ENCODE measurements at regions of chr5 and their contacts with region 1.

Region 1: DNA sequence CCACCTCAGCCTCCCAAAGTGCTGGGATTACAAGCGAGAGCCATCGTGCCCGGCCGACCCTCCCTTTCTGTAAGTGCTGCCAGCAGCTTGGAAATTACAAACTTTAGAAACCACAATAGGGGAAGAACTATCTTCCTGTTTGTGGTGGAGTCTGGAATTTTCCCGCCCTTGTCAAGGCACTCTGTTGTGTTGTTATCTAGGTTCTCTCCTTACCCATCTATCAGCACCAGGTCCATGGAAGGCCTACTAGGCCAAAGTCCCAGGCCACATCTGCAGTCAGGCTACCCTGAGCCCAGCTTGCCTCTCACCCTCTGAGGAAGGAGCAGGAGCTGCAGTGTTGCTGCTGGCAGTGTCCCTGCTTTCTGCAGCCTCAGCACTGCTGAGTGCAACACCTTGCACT is 214.9 kb downstream of the MCTP1 start:
- DNase-seq: no peak
- H3K4me3 ChIP-seq: no peak overlapping the region
- H3K27ac ChIP-seq: peak overlapping the region in 1 of 2 donors; percentile 43
- H3K4me1 ChIP-seq: no peaks in the 10 kb centered on the region
- H3K27me3 ChIP-seq: no peaks in the 10 kb centered on the region
- CTCF ChIP-seq: no peak
- POLR2A ChIP-seq: no peak

Region 2: GRCh38 chr5:94776167-94776566 is 293.8 kb before region 1 on chr5:
- intact Hi-C with region 1: loop called (anchors 10 kb)
- DNase-seq: no peak
- H3K4me3 ChIP-seq: no peak overlapping the region
- H3K27ac ChIP-seq: no peak overlapping the region
- H3K4me1 ChIP-seq: no peaks in the 10 kb centered on the region
- H3K27me3 ChIP-seq: no peaks in the 10 kb centered on the region
- CTCF ChIP-seq: no peak
- POLR2A ChIP-seq: no peak

Measured in breast epithelium (tissue), 4 donors.